ENCODE measurements at regions of chr6 and their contacts with region 1.

Region 1: DNA sequence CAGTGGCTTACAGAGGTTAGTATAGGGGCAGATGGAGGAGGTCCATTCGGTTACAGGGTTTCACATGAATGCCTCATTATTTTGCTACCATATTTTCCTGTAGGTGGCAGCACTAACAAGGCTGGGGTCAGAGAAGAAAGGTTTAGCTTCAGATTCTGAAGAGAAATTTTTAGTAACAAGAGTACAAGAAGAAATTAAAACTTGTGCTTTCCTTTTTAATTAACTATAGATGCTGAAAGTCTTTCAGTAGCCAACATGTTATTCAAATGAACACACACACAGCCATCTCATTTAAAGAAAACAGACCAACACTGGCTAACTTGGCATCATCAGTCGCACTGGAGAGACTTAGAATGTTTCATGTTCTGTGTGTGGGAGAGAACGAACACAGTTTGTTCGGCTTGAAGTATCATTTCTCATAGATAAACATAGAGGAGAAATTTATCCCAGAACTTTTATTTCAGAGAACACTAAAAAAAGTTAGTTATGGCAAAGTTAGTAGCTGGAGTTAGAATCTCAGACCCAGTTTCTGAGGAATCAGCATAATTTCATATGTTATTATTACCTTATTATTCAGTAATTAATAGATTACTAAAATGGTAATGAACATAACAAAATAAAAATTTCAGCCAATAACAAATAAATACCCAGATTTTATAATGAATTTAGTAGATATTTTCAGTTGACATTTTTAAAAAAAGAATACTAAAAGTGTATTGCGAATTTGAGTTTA is 314.0 kb upstream of the RSPO3 start:
- DNase-seq: peak; percentile 24
- H3K4me3 ChIP-seq: no peak overlapping the region
- H3K27ac ChIP-seq: no peak overlapping the region
- H3K4me1 ChIP-seq: no peaks in the 10 kb centered on the region
- H3K27me3 ChIP-seq: peaks cover 19% of the 10 kb centered on the region
- CTCF ChIP-seq: peak; percentile 84
- EP300 ChIP-seq: no peak
- RAD21 ChIP-seq: peak; percentile 71

Region 2: GRCh38 chr6:126721581-126722145 is 82.8 kb before region 1 on chr6:
- CTCF ChIA-PET with region 1: no interaction called
- POLR2A ChIA-PET with region 1: no interaction called
- DNase-seq: no peak
- H3K4me3 ChIP-seq: no peak overlapping the region
- H3K27ac ChIP-seq: no peak overlapping the region
- H3K4me1 ChIP-seq: no peaks in the 10 kb centered on the region
- H3K27me3 ChIP-seq: no peaks in the 10 kb centered on the region
- CTCF ChIP-seq: no peak
- EP300 ChIP-seq: no peak
- RAD21 ChIP-seq: no peak

Region 3: DNA sequence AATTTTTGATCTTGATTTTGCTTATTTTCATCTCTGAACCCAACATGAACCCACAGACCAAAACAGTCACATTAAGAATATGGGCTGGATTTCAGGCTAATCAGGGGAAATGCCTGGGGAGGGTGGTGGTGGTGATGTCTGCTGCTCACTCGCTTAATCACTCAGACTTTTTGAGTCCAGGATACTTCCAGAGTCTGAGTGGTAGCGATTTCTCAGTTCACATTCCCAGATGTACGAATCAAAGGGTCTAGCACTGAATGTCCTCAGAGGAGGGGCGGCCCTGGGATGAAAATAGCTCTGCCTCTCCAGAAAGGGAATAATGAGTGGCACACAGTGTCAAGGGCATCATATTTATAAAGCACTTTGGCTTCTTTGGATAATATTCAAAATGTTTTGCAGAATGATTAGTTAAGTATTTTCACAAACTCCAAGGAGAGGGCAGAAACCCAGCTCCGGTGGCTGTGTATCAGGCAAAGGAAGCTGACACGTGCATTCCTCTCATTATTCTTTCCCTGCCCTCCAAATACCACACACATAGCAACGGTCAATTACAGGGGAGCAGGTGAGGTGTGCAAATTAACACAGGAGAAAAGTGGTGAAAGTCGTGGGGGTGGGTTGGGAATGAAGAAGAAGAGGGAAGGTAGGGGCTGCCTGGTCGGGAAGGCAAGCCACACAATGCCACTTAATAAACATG is 31.2 kb before region 1 on chr6:
- CTCF ChIA-PET with region 1: interaction called, 15 read pairs
- POLR2A ChIA-PET with region 1: no interaction called
- DNase-seq: no peak
- H3K4me3 ChIP-seq: no peak overlapping the region
- H3K27ac ChIP-seq: no peak overlapping the region
- H3K4me1 ChIP-seq: no peaks in the 10 kb centered on the region
- H3K27me3 ChIP-seq: no peaks in the 10 kb centered on the region; the same call in 1 of the 2 replicates
- CTCF ChIP-seq: no peak
- EP300 ChIP-seq: no peak
- RAD21 ChIP-seq: no peak

Region 4: GRCh38 chr6:126781582-126781981 is 22.9 kb before region 1 on chr6:
- CTCF ChIA-PET with region 1: interaction called, 15 read pairs
- POLR2A ChIA-PET with region 1: no interaction called
- DNase-seq: no peak
- H3K4me3 ChIP-seq: no peak overlapping the region
- H3K27ac ChIP-seq: no peak overlapping the region
- H3K4me1 ChIP-seq: no peaks in the 10 kb centered on the region
- H3K27me3 ChIP-seq: peaks cover 4% of the 10 kb centered on the region; the same call in 1 of the 2 replicates
- CTCF ChIP-seq: no peak
- EP300 ChIP-seq: no peak
- RAD21 ChIP-seq: no peak

Region 5: DNA sequence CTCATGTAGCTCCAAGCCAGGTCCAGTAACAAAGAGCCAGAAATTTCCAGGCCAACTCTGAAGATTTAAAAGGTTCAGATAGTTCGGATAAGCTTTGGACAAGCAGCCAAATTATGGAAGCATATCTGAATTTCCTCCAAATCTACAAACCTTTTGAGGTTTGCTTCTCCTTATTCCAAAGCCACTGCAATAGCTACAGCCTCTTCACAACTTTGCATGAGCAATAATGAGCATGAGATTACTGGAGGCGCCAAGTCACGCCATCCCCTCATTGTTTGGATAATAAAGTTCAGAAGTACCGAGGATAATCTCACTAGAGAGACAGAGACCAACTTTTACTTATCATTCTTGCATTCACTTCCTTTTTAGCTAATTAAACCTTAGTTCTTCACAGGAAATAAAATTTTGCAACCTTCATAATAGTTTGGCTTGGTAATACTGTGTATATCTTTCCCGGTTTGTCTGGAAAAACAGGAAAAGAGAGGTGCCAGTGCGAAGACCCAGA is 15.6 kb before region 1 on chr6:
- CTCF ChIA-PET with region 1: interaction called, 41 read pairs
- POLR2A ChIA-PET with region 1: no interaction called
- DNase-seq: no peak
- H3K4me3 ChIP-seq: no peak overlapping the region
- H3K27ac ChIP-seq: no peak overlapping the region
- H3K4me1 ChIP-seq: no peaks in the 10 kb centered on the region; a peak in 1 of 4 replicates
- H3K27me3 ChIP-seq: peaks cover 1% of the 10 kb centered on the region
- CTCF ChIP-seq: no peak
- EP300 ChIP-seq: no peak
- RAD21 ChIP-seq: no peak

Measured in SK-N-SH (cell line).